ENCODE measurements at regions of chr2 and their contacts with region 1.

Region 1: DNA sequence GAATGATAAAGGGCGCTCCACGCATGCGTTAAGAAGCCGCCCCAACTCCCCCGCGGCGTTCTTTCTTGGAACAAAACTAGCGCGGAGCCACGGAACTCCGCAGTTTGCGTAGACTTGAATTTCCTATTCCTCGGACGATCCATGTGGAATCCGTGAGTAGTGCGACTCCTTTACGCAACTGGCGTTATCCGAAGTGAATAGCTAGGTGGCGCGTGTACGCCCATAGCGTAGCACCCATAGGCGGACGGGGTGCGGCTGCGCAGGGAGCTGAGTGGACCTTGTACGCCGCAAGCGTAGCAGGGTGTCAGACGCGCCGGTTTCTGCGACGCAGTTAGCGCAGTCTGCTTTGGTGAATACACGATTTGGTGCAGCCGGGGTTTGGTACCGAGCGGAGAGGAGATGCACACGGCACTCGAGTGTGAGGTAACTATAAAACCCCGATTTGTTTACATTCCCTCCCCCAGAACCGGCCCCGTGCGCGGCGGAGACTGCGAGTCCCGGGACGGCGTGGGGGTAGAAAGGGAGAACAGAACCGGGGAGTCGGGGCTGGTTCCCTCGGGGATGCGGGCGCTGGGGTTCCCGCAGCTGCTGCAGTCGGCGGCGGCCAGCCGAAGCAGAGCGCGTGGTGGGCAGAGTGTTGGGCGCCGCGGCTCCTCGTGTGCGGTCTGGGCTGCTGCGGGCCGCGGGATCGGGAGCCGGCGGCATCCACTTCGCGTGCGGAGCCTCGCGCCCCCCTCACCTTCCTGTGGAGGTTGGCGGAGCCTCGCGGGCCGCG is at the start of gene SLC39A10:
- H3K4me3 ChIP-seq: peak within 1 kb of the TSS; percentile 86
- H3K27ac ChIP-seq: peak within 1 kb of the TSS; percentile 86
- H3K4me1 ChIP-seq: no peaks in the 10 kb centered on the region
- CTCF ChIP-seq: no peak; the same call in 1 of the 2 replicates

Region 2: DNA sequence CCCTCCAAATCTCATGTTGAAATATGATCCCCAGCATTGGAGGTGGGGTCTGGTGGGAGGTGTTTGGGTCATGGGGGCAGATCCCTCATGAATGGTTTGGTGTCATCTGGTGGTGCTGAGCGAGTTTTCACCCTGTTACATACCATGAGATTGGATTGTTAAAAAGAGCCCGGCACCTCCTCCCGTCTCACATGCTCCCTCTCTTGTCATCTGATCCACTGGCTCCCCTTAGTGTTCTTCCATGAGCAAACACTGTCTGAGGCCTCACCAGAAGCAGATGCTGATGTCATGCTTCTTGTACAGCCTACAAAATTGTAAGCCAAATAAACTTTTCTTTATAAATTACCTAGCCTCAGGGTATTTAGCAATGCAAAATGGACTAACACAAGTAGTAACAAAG is 405.0 kb before region 1 on chr2:
- CTCF ChIA-PET with region 1: no interaction called
- POLR2A ChIA-PET with region 1: no interaction called
- H3K4me3 ChIP-seq: no peak overlapping the region
- H3K27ac ChIP-seq: no peak overlapping the region
- H3K4me1 ChIP-seq: no peaks in the 10 kb centered on the region
- CTCF ChIP-seq: no peak

Region 3: DNA sequence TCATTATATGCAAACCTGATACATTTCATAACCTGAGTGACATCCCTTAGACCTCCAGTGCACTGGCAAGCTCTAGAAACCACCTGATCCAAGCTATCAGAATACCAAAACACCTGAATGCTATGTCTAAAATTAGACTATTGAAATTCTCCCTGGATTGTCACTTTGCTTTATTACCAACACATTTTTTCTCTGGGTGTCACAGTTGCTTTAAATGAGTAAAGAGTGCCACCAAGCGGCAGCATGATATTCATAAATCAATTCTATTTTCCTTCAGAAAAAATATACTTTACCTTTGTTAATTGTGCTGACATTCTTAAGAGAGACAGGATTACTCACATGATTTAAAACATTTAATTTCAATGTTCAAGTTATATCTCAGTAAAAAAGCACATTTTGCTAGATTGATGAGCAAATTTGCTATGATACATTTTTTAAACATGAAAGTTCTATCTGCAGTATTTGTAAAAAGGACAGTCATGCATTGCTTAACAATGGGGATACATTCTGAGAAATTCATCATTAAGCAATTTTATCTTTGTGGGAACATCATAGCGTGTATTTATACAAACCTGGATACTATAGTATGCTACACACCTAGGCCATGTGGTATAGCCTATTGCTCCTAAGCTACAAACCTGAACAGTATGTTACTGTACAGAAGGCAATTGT is 338.5 kb before region 1 on chr2:
- CTCF ChIA-PET with region 1: interaction called, 12 read pairs
- POLR2A ChIA-PET with region 1: no interaction called
- H3K4me3 ChIP-seq: no peak overlapping the region
- H3K27ac ChIP-seq: no peak overlapping the region
- H3K4me1 ChIP-seq: no peaks in the 10 kb centered on the region
- CTCF ChIP-seq: no peak

Region 4: DNA sequence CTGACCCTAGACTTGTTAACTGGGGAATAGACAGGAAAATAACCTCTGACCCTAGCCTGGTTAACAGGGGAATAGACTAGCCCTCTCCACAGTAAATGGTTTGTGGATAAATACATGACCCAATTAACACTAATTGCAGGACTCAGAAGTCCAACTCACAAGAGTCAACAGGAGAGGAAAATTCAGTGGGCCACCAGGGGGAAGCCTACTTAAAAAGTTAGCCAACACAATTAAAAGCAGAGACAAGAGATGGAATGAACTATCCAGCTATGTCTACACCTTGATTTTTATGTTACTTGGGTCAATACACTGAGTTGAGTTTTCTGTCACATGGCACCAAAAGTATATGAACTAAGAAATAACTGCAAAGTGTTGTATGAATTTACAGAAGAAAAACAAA is 158.9 kb before region 1 on chr2:
- CTCF ChIA-PET with region 1: interaction called, 18 read pairs
- POLR2A ChIA-PET with region 1: no interaction called
- H3K4me3 ChIP-seq: no peak overlapping the region
- H3K27ac ChIP-seq: no peak overlapping the region
- H3K4me1 ChIP-seq: no peaks in the 10 kb centered on the region
- CTCF ChIP-seq: no peak

Region 5: DNA sequence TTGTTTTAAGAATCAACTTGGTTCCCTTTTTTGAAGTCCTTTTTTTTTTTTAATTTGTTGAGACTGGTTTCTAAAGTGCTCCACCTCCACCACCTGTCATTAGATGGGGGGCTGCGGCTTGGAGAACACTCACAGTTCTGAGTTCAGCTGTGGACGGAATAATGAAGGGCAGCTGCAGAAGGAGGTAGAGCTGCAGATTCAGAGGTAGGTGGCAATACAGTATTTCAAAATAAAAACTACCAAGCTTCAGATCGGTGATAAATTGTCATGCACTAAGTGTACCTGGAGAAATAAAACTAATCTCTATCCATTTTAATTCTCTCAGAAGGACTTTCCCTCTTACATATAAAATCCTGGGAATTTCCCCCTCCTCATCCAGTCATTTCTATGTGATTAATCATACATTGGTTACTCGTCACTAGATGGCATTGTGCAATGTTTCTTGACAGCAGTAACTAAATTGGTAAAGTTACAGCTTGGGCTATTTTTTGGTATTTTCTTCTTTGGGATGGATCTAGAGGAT is 81.1 kb before region 1 on chr2:
- CTCF ChIA-PET with region 1: interaction called, 39 read pairs
- POLR2A ChIA-PET with region 1: interaction called, 7 read pairs
- H3K4me3 ChIP-seq: no peak overlapping the region
- H3K27ac ChIP-seq: no peak overlapping the region
- H3K4me1 ChIP-seq: no peaks in the 10 kb centered on the region
- CTCF ChIP-seq: no peak

Region 6: DNA sequence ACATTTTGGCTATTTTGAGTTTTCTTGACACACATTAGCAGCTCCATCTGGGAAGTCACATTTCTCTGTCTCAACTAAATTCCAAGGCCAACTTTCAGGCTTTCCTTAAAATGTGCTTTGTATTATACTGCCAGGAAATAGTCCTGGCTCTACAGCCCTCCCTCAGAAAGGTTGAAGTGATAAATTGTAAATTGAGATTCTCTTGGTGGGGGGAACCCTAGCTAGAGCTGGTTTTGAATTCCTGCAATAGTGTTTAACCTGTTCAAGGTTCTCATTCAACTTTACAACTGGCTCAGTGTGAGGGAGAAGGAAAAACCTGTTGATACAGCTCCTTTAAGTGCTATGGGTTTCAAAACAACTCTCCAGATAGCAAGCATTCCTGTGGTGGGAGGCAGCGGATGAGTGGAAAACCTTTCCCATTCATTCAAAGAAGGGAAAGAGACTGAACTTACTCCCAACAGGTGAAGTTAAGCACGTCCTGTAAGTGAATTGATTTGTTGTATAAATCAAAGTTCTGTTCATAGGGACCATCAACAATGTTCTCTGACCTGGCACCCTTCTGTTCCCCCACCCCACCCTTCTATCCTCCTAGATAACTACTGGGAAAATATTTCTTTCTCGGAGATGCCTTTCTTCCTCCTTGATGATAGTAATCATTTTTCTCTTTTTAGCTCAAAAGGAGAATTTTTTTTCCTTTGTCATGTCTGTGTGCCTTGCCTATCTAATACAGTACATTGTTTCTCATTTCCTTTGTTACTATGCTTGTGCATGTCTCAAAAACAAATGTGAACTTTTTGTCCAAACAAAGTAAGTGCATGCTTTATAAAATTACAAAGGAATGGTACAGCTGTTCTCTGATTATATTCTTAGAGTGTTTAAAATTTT is 44.2 kb before region 1 on chr2:
- CTCF ChIA-PET with region 1: interaction called, 6 read pairs
- POLR2A ChIA-PET with region 1: interaction called, 24 read pairs
- H3K4me3 ChIP-seq: peak overlapping the region; percentile 9; the same call in 1 of the 2 replicates
- H3K27ac ChIP-seq: no peak overlapping the region
- H3K4me1 ChIP-seq: peaks cover 2% of the 10 kb centered on the region; the same call in 1 of the 2 replicates
- CTCF ChIP-seq: no peak

Region 7: GRCh38 chr2:195898505-195899191 is 241.6 kb after region 1 on chr2:
- CTCF ChIA-PET with region 1: no interaction called
- POLR2A ChIA-PET with region 1: no interaction called
- H3K4me3 ChIP-seq: no peak overlapping the region
- H3K27ac ChIP-seq: no peak overlapping the region
- H3K4me1 ChIP-seq: no peaks in the 10 kb centered on the region
- CTCF ChIP-seq: no peak

Measured in HEK293 (cell line).